Panc1 (cell line): ENCODE measurements at regions of chr3 and their contacts with region 1.

Region 1: DNA sequence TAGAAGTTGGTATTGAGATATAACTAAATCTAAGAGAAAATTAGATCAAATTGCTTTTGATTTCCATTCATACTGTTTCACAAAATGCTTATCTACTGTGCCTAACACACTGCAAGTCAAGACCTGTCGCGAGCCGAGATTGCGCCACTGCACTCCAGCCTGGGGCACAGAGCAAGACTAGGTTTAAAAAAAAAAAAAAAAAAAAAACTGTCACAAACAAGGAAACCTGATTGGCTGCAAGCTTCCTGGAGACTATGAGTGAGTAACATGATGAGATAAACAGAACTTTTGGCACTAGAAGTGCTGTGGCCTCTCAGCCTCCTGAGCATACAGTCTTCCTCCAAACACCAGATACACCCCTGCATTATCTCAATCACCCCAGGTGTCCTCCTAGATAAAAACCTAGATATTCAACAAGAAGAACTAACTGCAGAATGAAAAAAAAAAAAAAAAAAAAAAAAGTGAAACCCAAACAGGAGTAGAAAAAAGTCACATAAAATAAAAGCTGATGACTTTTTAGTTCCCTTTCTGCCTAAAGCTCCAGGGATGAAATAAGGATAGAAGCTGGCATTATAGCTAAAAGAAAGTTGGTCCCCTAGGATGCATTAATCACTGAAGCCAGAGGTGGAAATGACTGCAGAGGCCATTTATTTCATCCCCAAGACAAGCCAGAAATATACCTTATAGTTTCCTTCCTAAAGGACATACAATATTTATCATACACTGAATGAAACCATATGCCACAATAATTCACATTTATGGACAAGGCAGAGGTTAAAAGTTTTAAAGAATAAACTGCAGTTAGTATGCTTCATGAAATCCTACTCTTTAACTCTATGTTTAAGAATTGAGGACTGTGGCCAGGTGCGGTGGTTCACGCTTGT is 82.4 kb downstream of the P3H2 start:
- DNase-seq: no peak
- ATAC-seq: 0 out of 2 replicates have a peak, but pooled peaks have one; percentile 38
- H3K4me3 ChIP-seq: no peak overlapping the region
- H3K27ac ChIP-seq: no peak overlapping the region; the same call in 1 of the 2 replicates
- H3K4me1 ChIP-seq: peaks cover 35% of the 10 kb centered on the region
- H3K27me3 ChIP-seq: no peaks in the 10 kb centered on the region
- CTCF ChIP-seq: no peak

Region 2: DNA sequence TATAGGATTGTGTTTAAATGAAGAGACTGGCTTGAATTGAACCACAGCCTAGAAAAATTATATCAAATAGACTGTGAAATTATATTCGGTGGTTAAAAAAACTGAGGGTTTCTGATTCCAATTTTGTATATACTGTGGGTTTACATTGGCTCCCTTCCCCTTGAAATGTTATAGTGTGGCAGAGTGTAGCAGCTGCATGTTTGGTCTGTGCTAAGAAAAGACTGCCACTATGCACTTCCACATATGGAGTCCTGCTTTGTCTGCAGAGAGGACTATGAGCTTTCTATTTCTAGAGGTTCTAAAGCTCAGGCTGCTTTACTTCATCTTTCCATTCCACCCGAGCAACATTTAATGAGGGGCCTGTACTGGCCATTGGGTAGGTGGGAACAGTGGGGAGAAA is 29.9 kb before region 1 on chr3:
- CTCF ChIA-PET with region 1: no interaction called
- POLR2A ChIA-PET with region 1: no interaction called
- in situ Hi-C with region 1: no loop called
- intact Hi-C with region 1: no loop called
- DNase-seq: no peak
- ATAC-seq: no peak
- H3K4me3 ChIP-seq: no peak overlapping the region
- H3K27ac ChIP-seq: peak overlapping the region; percentile 86
- H3K4me1 ChIP-seq: peaks cover 62% of the 10 kb centered on the region
- H3K27me3 ChIP-seq: no peaks in the 10 kb centered on the region
- CTCF ChIP-seq: no peak

Region 3: DNA sequence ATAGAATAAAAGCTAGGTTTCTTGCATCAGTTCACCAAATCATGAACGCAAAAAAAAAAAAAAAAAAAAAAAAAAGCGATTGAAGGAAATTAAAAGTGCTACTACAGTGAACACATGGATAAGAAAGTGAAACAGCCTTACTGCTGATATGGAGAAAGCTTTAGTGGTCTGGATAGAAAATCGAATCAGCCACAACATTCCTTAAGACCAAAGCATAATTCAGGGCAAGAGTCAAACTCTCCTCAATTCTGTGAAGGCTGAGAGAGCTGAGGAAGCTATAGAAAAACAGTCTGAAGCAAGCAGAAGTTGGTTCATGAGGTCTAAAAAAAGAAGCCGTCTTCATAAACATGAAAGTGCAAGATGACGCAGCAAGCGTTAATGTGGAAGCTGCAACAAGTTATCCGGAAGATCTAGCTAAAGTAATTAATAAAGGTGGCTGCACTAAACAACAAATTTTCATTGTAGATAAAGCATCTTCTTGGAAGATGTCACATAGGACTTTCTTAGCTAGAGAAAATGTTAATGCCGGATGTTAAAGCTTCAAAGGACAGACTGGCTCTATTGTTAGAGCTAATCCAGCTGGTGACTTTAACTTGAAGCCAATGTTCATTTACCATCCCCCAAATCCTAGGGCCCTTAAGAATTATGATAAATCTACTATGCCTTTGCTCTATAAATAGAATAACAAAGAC is 63.2 kb after region 1 on chr3:
- CTCF ChIA-PET with region 1: no interaction called
- POLR2A ChIA-PET with region 1: interaction called, 10 read pairs
- in situ Hi-C with region 1: no loop called
- intact Hi-C with region 1: no loop called
- DNase-seq: peak; percentile 50
- ATAC-seq: peak; percentile 61
- H3K4me3 ChIP-seq: peak overlapping the region; percentile 39 to 44
- H3K27ac ChIP-seq: peak overlapping the region; percentile 90
- H3K4me1 ChIP-seq: peaks cover 53% of the 10 kb centered on the region
- H3K27me3 ChIP-seq: no peaks in the 10 kb centered on the region
- CTCF ChIP-seq: no peak